ENCODE measurements at regions of chr11 and their contacts with region 1.

Region 1: GRCh38 chr11:59158206-59159068 is 13.5 kb upstream of the DTX4 start:
- DNase-seq: peak; percentile 77 to 89 (median 87)
- H3K4me3 ChIP-seq: peak overlapping the region in 4 of 7 experiments; percentile 25 to 70 (median 40)
- H3K27ac ChIP-seq: peak overlapping the region in 1 of 2 experiments; percentile 3
- H3K4me1 ChIP-seq: peaks cover 0 to 18% (median 13%) of the 10 kb centered on the region in 4 experiments
- H3K27me3 ChIP-seq: no peaks in the 10 kb centered on the region

Region 2: GRCh38 chr11:59011655-59012397 is 146.6 kb before region 1 on chr11:
- CTCF ChIA-PET with region 1: no interaction called
- POLR2A ChIA-PET with region 1: no interaction called
- DNase-seq: peak; percentile 10 to 45 (median 14)
- H3K4me3 ChIP-seq: peak overlapping the region in 2 of 7 experiments; percentile 7 to 17
- H3K27ac ChIP-seq: no peak overlapping the region
- H3K4me1 ChIP-seq: peaks cover 29 to 58% (median 44%) of the 10 kb centered on the region in 4 experiments
- H3K27me3 ChIP-seq: no peaks in the 10 kb centered on the region

Region 3: GRCh38 chr11:59097113-59097708 is 61.2 kb before region 1 on chr11:
- CTCF ChIA-PET with region 1: interaction called, 17 read pairs
- POLR2A ChIA-PET with region 1: no interaction called
- DNase-seq: peak; percentile 77 to 88 (median 84)
- H3K4me3 ChIP-seq: no peak overlapping the region
- H3K27ac ChIP-seq: no peak overlapping the region
- H3K4me1 ChIP-seq: peaks cover 0 to 6% (median 4%) of the 10 kb centered on the region in 4 experiments
- H3K27me3 ChIP-seq: no peaks in the 10 kb centered on the region

Region 4: DNA sequence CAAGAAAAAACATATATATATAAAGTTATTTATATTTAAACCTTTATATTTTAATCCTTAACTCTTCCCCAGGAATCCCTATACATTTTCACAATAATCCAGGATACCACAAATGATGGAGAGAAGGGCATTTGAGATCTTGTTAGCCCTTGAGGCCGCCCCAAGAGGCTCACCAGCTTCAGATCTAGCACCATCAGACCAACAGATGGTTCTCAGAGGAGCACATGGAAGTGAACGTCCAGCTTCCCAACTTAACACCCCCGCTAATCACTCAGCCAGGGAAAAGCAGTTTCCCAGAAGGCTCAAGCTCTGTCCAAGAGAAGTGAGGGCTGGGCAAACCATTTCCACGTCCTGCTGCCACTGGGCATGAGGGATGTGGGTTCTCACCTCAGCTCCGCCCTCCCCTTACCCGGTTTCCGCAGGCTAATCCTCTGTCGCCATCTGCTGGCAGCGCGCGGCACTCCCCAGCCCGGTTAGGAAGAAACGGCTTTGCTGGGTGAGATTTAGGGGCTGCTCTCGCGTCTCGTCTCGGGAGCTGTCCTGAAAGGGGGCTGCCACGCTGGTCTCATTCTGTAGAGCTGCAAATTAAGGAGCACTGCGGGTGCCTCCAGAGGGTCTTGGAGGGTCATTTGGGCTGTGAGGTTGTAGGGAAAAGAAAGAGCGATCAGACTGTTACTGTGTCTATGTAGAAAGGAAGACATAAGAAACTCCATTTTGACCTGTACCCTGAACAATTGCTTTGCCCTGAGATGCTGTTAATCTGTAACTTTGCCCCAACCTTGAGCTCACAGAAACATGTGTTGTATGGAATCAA is 22.6 kb before region 1 on chr11:
- CTCF ChIA-PET with region 1: interaction called, 117 read pairs
- POLR2A ChIA-PET with region 1: no interaction called
- DNase-seq: peak; percentile 82 to 92 (median 90)
- H3K4me3 ChIP-seq: peak overlapping the region in 3 of 7 experiments; percentile 33 to 60 (median 53)
- H3K27ac ChIP-seq: no peak overlapping the region
- H3K4me1 ChIP-seq: peaks cover 0 to 9% (median 5%) of the 10 kb centered on the region in 4 experiments
- H3K27me3 ChIP-seq: no peaks in the 10 kb centered on the region

Region 5: GRCh38 chr11:59142530-59143507 is 15.6 kb before region 1 on chr11 and contains the start of gene FAM111A:
- CTCF ChIA-PET with region 1: interaction called, 117 read pairs
- POLR2A ChIA-PET with region 1: interaction called, 3 read pairs
- DNase-seq: peak; percentile 94 to 98 (median 96)
- H3K4me3 ChIP-seq: peak within 1 kb of the TSS; percentile 84 to 99 (median 94)
- H3K27ac ChIP-seq: peak within 1 kb of the TSS; percentile 90 to 95
- H3K4me1 ChIP-seq: peaks cover 26 to 49% (median 41%) of the 10 kb centered on the region in 4 experiments
- H3K27me3 ChIP-seq: no peaks in the 10 kb centered on the region

Region 6: DNA sequence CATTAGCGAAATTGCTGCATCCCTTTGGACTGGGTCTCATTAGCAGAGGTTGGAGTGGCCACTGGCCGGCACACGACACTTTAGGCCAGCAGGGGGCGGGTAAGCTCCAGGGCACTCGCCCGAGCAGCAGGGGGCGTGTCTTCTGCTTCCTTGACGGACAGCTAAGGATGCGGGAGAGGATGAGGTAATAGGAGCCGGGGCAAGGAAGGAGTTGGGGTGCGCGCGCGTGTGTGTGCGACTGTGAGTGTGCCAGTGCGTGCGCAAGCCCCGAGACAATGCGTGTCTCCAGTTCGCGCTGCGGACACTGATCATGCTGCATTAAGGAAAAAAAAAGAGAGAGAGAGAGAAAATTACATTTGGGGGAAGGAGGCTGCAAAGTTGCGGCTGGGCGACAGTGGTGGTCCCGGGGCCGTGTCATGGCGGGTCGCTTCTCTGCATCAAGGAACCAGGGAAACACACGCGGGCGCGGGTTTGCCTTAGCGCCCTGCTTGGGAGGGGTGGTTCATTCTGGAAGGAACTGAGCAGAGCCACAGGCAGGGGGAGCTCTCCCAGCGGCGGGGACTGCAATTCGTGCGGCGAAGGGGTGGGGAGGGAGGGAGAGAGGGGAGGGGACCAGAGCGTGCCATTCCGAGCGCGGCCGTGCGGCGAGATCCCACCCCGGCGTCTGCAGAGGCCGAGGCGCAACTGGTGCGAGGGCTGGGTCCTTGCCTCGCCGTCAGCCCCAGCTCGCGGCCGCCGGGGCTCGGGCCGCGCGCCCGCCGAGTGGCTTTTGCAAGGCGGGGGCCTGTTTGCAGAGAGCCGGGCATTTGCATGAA is 13.3 kb after region 1 on chr11 and contains the start of gene DTX4:
- CTCF ChIA-PET with region 1: interaction called, 14 read pairs
- POLR2A ChIA-PET with region 1: no interaction called
- DNase-seq: peak; percentile 91 to 95 (median 95)
- H3K4me3 ChIP-seq: peak within 1 kb of the TSS; percentile 61 to 82 (median 71)
- H3K27ac ChIP-seq: no peak within 1 kb of the TSS
- H3K4me1 ChIP-seq: peaks cover 0 to 21% (median 16%) of the 10 kb centered on the region in 4 experiments
- H3K27me3 ChIP-seq: peaks cover 0 to 34% (median 21%) of the 10 kb centered on the region in 5 experiments

Measured in common myeloid progenitor, CD34-positive (primary cell).